ENCODE measurements at regions of chr10 and their contacts with region 1.

Region 1: DNA sequence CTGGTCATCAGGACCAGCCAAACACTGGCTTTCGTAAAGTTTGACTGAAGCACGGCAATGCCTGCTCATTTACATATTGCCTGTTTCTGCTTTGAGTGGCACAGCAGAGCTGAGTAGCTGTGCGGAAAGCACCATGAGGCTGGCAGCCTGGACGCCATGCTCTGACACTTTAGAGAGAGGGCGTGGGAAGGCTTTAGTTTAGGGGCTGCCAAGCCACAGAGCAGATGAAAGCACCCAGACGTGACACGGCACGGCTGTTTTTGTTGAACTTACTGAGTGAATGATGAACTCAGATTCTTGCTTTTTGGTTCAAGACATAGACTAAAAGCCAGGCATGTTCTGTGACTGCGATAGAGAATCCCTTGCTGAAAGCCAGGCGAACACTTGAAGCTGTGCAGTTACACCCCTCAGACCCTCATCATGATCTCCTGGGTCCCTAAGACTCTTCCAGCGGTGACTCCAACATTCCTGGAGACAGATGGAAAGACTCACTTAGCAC is 182.1 kb downstream of the ZMYND11 start:
- DNase-seq: peak; percentile 91
- ATAC-seq: peak; percentile 99
- H3K4me3 ChIP-seq: peak overlapping the region in 2 of 5 experiments; percentile 8 to 9
- H3K4me3 Mint-ChIP-seq: peak overlapping the region; percentile 84
- H3K27ac ChIP-seq: peak overlapping the region; percentile 83 to 89
- H3K27ac Mint-ChIP-seq: peak overlapping the region; percentile 93
- H3K4me1 ChIP-seq: peaks cover 58 to 60% of the 10 kb centered on the region in 2 donors
- H3K4me1 Mint-ChIP-seq: peaks cover 60% of the 10 kb centered on the region
- H3K27me3 ChIP-seq: no peaks in the 10 kb centered on the region
- H3K27me3 Mint-ChIP-seq: no peaks in the 10 kb centered on the region
- CTCF ChIP-seq: no peak

Region 2: DNA sequence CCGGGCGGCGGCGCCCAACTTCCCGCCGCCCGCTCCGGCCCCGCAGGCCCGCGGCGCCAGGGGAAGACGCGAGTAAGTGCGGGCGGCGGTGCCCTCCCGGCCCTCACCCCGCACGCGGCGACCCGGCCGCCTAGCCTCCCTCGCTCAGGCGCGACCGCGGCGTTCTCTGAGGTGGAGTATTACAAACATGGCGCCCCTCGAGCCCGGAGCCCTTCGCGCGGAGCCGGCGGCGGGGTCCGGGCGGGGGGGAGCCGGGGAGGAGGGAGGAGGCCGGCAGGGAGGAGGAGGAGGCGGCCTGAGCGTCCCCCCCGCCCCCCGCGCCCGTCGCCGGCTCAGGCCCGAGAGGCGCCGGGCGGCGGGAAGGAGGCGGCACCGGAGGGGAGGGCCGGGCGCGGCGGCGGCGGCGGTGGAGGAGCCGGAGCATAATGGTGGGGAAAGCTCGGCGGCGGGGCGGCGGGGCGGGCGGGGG is 182.2 kb before region 1 on chr10 and contains the start of gene ZMYND11:
- CTCF ChIA-PET with region 1: no interaction called
- POLR2A ChIA-PET with region 1: interaction called, 3 read pairs
- intact Hi-C with region 1: loop called (anchors 5 kb)
- DNase-seq: peak; percentile 81
- ATAC-seq: peak; percentile 52
- H3K4me3 ChIP-seq: peak within 1 kb of the TSS; percentile 64 to 73 (median 73)
- H3K4me3 Mint-ChIP-seq: peak within 1 kb of the TSS; percentile 92
- H3K27ac ChIP-seq: peak within 1 kb of the TSS; percentile 44 to 83
- H3K27ac Mint-ChIP-seq: peak within 1 kb of the TSS; percentile 97
- H3K4me1 ChIP-seq: peaks cover 16 to 19% of the 10 kb centered on the region in 2 donors
- H3K4me1 Mint-ChIP-seq: peaks cover 35% of the 10 kb centered on the region
- H3K27me3 ChIP-seq: peaks cover 0 to 22% (median 10%) of the 10 kb centered on the region in 4 experiments
- H3K27me3 Mint-ChIP-seq: peaks cover 15% of the 10 kb centered on the region
- CTCF ChIP-seq: no peak
- total RNA-seq, gene ZMYND11: 47.9 and 50.1 TPM in 2 replicates

Region 3: GRCh38 chr10:297567-297966 is 19.8 kb before region 1 on chr10:
- CTCF ChIA-PET with region 1: interaction called, 4 read pairs
- POLR2A ChIA-PET with region 1: no interaction called
- intact Hi-C with region 1: loop called (anchors 2 kb)
- DNase-seq: no peak
- ATAC-seq: no peak
- H3K4me3 ChIP-seq: no peak overlapping the region
- H3K4me3 Mint-ChIP-seq: no peak overlapping the region
- H3K27ac ChIP-seq: no peak overlapping the region
- H3K27ac Mint-ChIP-seq: no peak overlapping the region
- H3K4me1 ChIP-seq: peaks cover 29 to 42% of the 10 kb centered on the region in 2 donors
- H3K4me1 Mint-ChIP-seq: peaks cover 52% of the 10 kb centered on the region
- H3K27me3 ChIP-seq: no peaks in the 10 kb centered on the region
- H3K27me3 Mint-ChIP-seq: peaks cover 3% of the 10 kb centered on the region
- CTCF ChIP-seq: no peak

Region 4: GRCh38 chr10:306675-307185 is 10.6 kb before region 1 on chr10:
- CTCF ChIA-PET with region 1: interaction called, 16 read pairs
- POLR2A ChIA-PET with region 1: interaction called, 8 read pairs
- intact Hi-C with region 1: no loop called
- DNase-seq: peak; percentile 61
- ATAC-seq: peak; percentile 75
- H3K4me3 ChIP-seq: peak overlapping the region; percentile 1 to 50 (median 40)
- H3K4me3 Mint-ChIP-seq: peak overlapping the region; percentile 71
- H3K27ac ChIP-seq: peak overlapping the region; percentile 75 to 77
- H3K27ac Mint-ChIP-seq: peak overlapping the region; percentile 91
- H3K4me1 ChIP-seq: peaks cover 60 to 75% of the 10 kb centered on the region in 2 donors
- H3K4me1 Mint-ChIP-seq: peaks cover 73% of the 10 kb centered on the region
- H3K27me3 ChIP-seq: no peaks in the 10 kb centered on the region
- H3K27me3 Mint-ChIP-seq: no peaks in the 10 kb centered on the region
- CTCF ChIP-seq: no peak

Region 5: GRCh38 chr10:329361-330099 is 12.2 kb after region 1 on chr10:
- CTCF ChIA-PET with region 1: interaction called, 4 read pairs
- POLR2A ChIA-PET with region 1: interaction called, 3 read pairs
- intact Hi-C with region 1: loop called (anchors 1 kb)
- DNase-seq: no peak
- ATAC-seq: no peak
- H3K4me3 ChIP-seq: no peak overlapping the region
- H3K4me3 Mint-ChIP-seq: peak overlapping the region; percentile 49
- H3K27ac ChIP-seq: no peak overlapping the region
- H3K27ac Mint-ChIP-seq: peak overlapping the region; percentile 29
- H3K4me1 ChIP-seq: peaks cover 29 to 45% of the 10 kb centered on the region in 2 donors
- H3K4me1 Mint-ChIP-seq: peaks cover 49% of the 10 kb centered on the region
- H3K27me3 ChIP-seq: no peaks in the 10 kb centered on the region
- H3K27me3 Mint-ChIP-seq: peaks cover 6% of the 10 kb centered on the region
- CTCF ChIP-seq: no peak

Region 6: DNA sequence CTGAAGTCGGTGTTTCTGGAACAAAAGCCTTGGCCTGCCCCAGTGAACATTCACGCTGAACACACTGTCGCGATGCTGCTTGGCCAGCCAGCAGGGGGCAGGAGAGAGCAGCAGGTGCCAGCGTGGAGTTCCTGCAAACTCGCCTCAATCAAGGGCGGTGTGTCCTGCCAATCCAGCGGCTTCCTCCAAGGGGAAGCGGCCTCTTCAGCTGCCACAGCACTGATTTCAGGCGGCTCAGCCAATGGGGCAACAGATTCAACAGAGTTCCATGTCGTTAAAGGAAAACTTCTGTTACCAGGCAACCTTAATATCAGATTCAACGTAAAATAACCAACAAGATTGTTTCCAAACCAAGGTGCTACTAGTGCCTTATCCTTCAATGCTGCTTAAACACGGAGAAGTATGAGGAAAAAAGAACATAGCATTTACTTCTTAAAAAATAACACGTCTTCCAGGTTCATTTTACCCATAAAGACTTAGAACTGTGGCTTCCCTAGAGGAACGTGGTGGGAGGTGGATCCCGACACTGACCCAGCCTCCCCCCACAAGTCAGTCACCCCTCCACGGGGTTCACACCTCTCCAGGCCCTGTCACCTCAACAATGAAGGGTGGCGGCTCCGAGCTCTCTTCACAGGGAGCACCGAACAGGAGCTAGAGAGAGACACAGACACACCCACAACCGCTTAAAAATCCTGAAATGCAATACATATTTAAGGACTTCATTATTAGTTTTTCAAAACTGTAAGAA is 194.0 kb after region 1 on chr10:
- CTCF ChIA-PET with region 1: no interaction called
- POLR2A ChIA-PET with region 1: no interaction called
- intact Hi-C with region 1: no loop called
- DNase-seq: peak; percentile 79
- ATAC-seq: peak; percentile 81
- H3K4me3 ChIP-seq: no peak overlapping the region
- H3K4me3 Mint-ChIP-seq: peak overlapping the region; percentile 48
- H3K27ac ChIP-seq: no peak overlapping the region
- H3K27ac Mint-ChIP-seq: no peak overlapping the region
- H3K4me1 ChIP-seq: peaks cover 11 to 19% of the 10 kb centered on the region in 2 donors
- H3K4me1 Mint-ChIP-seq: peaks cover 14% of the 10 kb centered on the region
- H3K27me3 ChIP-seq: peaks cover 0 to 19% (median 3%) of the 10 kb centered on the region in 4 experiments
- H3K27me3 Mint-ChIP-seq: peaks cover 20% of the 10 kb centered on the region
- CTCF ChIP-seq: peak; percentile 89

Region 7: GRCh38 chr10:931416-932318 is 614.3 kb after region 1 on chr10 and contains the start of gene LARP4B:
- CTCF ChIA-PET with region 1: interaction called, 3 read pairs
- POLR2A ChIA-PET with region 1: no interaction called
- intact Hi-C with region 1: loop called (anchors 5 kb)
- DNase-seq: peak; percentile 99
- ATAC-seq: peak; percentile 96
- H3K4me3 ChIP-seq: peak within 1 kb of the TSS; percentile 60 to 89 (median 74)
- H3K4me3 Mint-ChIP-seq: peak within 1 kb of the TSS; percentile 97
- H3K27ac ChIP-seq: peak within 1 kb of the TSS; percentile 89
- H3K27ac Mint-ChIP-seq: peak within 1 kb of the TSS; percentile 95
- H3K4me1 ChIP-seq: peaks cover 30 to 33% of the 10 kb centered on the region in 2 donors
- H3K4me1 Mint-ChIP-seq: peaks cover 47% of the 10 kb centered on the region
- H3K27me3 ChIP-seq: peaks cover 0 to 4% (median 2%) of the 10 kb centered on the region in 4 experiments
- H3K27me3 Mint-ChIP-seq: peaks cover 17% of the 10 kb centered on the region
- CTCF ChIP-seq: no peak
- total RNA-seq, gene LARP4B: 124 and 129 TPM in 2 replicates

Region 8: GRCh38 chr10:1048732-1049424 is 731.6 kb after region 1 on chr10 and contains the start of gene IDI1:
- CTCF ChIA-PET with region 1: no interaction called
- POLR2A ChIA-PET with region 1: no interaction called
- intact Hi-C with region 1: loop called (anchors 10 kb)
- DNase-seq: peak; percentile 99
- ATAC-seq: peak; percentile 78
- H3K4me3 ChIP-seq: peak within 1 kb of the TSS; percentile 79 to 95 (median 91)
- H3K4me3 Mint-ChIP-seq: peak within 1 kb of the TSS; percentile 92
- H3K27ac ChIP-seq: peak within 1 kb of the TSS; percentile 99 to 100
- H3K27ac Mint-ChIP-seq: peak within 1 kb of the TSS; percentile 97
- H3K4me1 ChIP-seq: peaks cover 41 to 50% of the 10 kb centered on the region in 2 donors
- H3K4me1 Mint-ChIP-seq: peaks cover 64% of the 10 kb centered on the region
- H3K27me3 ChIP-seq: no peaks in the 10 kb centered on the region
- H3K27me3 Mint-ChIP-seq: no peaks in the 10 kb centered on the region
- CTCF ChIP-seq: no peak
- total RNA-seq, gene IDI1: 59.8 and 60.7 TPM in 2 replicates

Measured in B cell (primary cell).